Prostate gland (tissue), 2 donors: ENCODE measurements at regions of chr5 and their contacts with region 1.

Region 1: DNA sequence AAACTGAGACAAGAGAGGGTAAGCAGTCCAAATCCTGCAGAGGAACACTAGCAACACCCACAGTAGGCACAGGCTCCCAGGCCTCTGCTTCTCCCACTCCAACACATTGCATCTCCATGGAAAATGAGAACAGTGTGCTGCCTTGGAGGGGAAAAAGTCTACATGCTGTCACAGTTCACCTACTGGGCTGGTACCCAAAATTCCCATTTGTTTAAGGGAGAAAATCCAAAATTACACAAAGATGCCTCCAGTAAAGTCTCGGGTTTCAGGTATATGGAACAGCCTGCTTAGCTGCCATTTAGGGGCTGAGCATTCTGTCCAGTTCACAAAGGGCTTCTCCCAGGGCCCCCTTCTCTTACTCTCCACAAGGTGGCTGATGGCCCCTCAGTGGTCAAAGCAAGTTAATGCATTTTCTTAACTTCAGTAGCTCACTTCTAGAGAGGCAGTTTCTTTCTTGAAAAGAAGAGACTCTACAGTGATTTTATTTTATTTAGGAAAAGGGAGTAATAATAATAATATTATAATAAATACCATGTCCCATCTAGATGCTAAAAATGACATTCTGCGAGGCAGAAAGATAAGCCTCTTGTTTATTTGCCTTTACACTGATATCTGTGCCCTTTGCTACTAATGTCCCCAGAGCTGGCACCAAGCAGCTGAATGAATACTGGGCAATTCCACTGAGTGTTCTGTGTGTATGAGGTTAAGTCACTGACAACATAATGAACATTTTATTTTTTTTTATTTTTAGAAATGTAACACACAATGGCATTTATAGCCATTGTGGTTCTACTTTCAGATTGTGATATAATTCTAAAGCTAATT is 89.4 kb downstream of the RGS7BP start:
- DNase-seq: no peak
- H3K4me3 ChIP-seq: no peak overlapping the region
- H3K27ac ChIP-seq: no peak overlapping the region
- H3K4me1 ChIP-seq: no peaks in the 10 kb centered on the region
- H3K27me3 ChIP-seq: no peaks in the 10 kb centered on the region
- CTCF ChIP-seq: peak in 2 of 4 experiments; percentile 22 to 38
- POLR2A ChIP-seq: no peak

Region 2: DNA sequence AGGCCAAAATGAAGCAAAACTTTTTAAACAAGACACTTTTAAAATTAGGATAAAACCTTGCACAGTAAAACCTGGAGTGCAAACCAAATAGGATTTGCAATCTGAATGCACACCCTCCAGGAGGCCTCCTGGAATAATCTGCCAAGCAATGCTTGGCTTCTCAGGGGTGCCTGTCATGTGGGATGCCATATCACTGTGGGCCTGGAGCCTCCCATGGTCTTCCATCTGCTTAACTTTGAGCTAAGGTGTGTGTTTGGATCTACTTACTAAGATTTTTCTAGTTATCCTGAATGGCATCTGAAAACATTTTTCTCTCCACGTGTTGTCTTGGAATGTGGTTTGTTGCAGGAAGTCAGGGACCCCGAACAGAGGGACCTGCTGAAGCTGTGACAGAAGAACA is 37.3 kb before region 1 on chr5:
- intact Hi-C with region 1: loop called (anchors 5 kb)
- DNase-seq: no peak
- H3K4me3 ChIP-seq: no peak overlapping the region
- H3K27ac ChIP-seq: no peak overlapping the region
- H3K4me1 ChIP-seq: no peaks in the 10 kb centered on the region
- H3K27me3 ChIP-seq: no peaks in the 10 kb centered on the region
- CTCF ChIP-seq: no peak
- POLR2A ChIP-seq: no peak

Region 3: GRCh38 chr5:64790210-64790609 is 195.0 kb after region 1 on chr5:
- intact Hi-C with region 1: no loop called
- DNase-seq: no peak
- H3K4me3 ChIP-seq: no peak overlapping the region
- H3K27ac ChIP-seq: no peak overlapping the region
- H3K4me1 ChIP-seq: peaks cover 3% of the 10 kb centered on the region
- H3K27me3 ChIP-seq: no peaks in the 10 kb centered on the region
- CTCF ChIP-seq: no peak
- POLR2A ChIP-seq: no peak

Region 4: DNA sequence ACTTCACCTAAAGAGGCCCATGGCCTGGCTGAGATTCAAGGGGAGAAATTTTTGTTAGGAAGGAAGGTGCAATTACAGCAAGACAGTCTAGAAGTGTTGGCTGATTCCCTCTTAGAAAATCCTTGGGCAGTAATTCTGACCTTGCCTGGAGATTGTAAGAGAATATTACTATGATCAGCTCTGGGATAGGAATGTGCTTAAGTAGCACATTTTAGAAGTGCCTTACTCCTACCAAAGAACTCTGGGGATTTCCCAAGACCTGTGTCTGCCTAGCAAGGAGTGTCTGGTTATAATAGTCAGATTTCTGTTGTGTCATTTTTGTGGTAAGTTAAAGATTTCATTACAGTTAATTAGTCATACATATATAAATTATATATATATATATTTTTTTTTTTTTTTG is 1179.1 kb after region 1 on chr5:
- intact Hi-C with region 1: no loop called
- DNase-seq: no peak
- H3K4me3 ChIP-seq: no peak overlapping the region
- H3K27ac ChIP-seq: no peak overlapping the region
- H3K4me1 ChIP-seq: no peaks in the 10 kb centered on the region
- H3K27me3 ChIP-seq: no peaks in the 10 kb centered on the region
- CTCF ChIP-seq: no peak
- POLR2A ChIP-seq: no peak